Mammary epithelial cell (primary cell): ENCODE measurements at regions of chr17 and their contacts with region 1.

Region 1: GRCh38 chr17:50064258-50065001 is 8.5 kb downstream of the ITGA3 start:
- DNase-seq: peak; percentile 96
- H3K4me3 ChIP-seq: no peak overlapping the region
- H3K27ac ChIP-seq: peak overlapping the region; percentile 73
- H3K4me1 ChIP-seq: peaks cover 66% of the 10 kb centered on the region
- H3K27me3 ChIP-seq: no peaks in the 10 kb centered on the region
- CTCF ChIP-seq: peak in 1 of 2 donors; percentile 4

Region 2: DNA sequence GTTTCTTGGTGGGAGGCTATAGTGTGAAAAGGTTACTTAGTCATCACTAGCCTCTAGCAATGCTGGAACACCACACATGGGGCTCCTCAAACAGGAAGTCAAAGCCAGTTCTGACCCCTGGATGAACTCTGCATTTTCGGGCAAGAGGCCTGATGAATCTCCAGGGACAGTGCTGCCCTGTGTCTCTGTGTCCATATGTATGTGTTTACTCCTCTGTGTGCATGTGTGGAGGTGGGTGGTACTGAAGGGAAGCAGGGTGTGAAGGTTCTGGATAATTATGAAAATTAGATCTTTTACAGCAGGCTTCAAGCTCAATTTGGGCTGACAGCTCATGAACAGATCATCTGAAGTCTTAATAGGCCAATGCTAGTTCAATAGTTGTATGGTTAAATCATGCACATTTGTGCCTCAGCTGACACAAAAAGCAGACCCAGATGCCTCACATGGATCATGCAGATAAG is 1823.3 kb before region 1 on chr17:
- CTCF ChIA-PET with region 1: interaction called, 21 read pairs
- dilution Hi-C with region 1: no loop called
- in situ Hi-C with region 1: no loop called
- intact Hi-C with region 1: no loop called
- DNase-seq: peak; percentile 56
- H3K4me3 ChIP-seq: no peak overlapping the region
- H3K27ac ChIP-seq: peak overlapping the region; percentile 38
- H3K4me1 ChIP-seq: peaks cover 50% of the 10 kb centered on the region
- H3K27me3 ChIP-seq: no peaks in the 10 kb centered on the region
- CTCF ChIP-seq: no peak

Region 3: DNA sequence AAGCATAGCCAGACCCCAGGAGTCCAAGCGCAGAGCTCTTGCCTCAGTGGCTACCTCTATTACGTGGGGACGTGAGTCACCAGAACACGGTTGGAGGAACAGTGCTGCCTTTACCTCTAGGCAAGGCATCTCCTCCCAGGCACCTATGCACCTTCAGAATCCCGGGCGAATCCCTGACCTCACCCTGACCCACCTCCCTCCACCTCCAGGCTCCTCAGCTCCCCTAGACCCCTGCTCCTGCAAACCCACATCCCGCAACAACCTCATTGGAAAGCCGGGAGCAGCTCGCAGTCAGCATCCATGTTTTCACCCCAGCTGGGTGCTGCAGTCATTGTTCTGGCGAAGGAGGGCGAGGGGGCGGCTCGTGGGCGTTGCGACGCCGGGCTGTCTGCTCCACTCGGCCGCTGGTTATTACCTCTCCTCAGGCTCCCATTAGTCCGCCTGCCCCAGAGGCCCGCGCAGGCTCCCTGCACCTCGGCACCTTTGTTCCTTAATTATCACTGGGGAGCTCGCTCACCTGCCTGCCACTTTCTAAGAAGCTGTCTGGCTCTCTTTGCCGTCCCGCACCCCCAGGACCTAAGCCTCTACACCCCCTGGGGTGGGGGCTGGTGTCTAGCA is 120.0 kb before region 1 on chr17:
- CTCF ChIA-PET with region 1: no interaction called
- dilution Hi-C with region 1: no loop called
- in situ Hi-C with region 1: no loop called
- intact Hi-C with region 1: no loop called
- DNase-seq: no peak
- H3K4me3 ChIP-seq: no peak overlapping the region
- H3K27ac ChIP-seq: no peak overlapping the region
- H3K4me1 ChIP-seq: no peaks in the 10 kb centered on the region
- H3K27me3 ChIP-seq: peaks cover 8% of the 10 kb centered on the region
- CTCF ChIP-seq: no peak

Region 4: DNA sequence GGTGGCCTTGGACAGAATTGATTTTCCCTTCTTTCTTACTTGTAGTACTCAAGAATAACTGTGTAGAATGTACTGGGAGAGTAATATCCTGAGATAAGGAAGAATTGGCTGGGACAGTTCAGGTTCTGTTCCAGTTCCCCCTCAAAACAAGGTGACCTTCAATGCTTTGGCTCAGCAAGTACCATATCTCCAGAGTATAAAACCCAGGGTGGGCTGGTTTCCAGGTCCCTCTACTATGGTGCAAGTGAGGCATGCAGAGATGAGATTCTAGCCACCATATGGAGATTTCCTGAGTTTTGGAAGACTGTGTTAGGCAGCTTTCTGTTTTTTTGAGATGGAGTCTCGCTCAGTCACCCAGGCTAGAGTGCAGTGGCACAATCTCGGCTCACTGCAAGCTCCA is 51.4 kb before region 1 on chr17:
- CTCF ChIA-PET with region 1: no interaction called
- dilution Hi-C with region 1: loop called (anchors 5 kb)
- in situ Hi-C with region 1: no loop called
- intact Hi-C with region 1: no loop called
- DNase-seq: no peak
- H3K4me3 ChIP-seq: no peak overlapping the region
- H3K27ac ChIP-seq: no peak overlapping the region
- H3K4me1 ChIP-seq: no peaks in the 10 kb centered on the region
- H3K27me3 ChIP-seq: no peaks in the 10 kb centered on the region
- CTCF ChIP-seq: no peak

Region 5: GRCh38 chr17:50079334-50080095 is 15.1 kb after region 1 on chr17:
- CTCF ChIA-PET with region 1: interaction called, 6 read pairs
- dilution Hi-C with region 1: no loop called
- in situ Hi-C with region 1: no loop called
- intact Hi-C with region 1: loop called (anchors 2 kb)
- DNase-seq: peak; percentile 53
- H3K4me3 ChIP-seq: no peak overlapping the region
- H3K27ac ChIP-seq: no peak overlapping the region
- H3K4me1 ChIP-seq: no peaks in the 10 kb centered on the region
- H3K27me3 ChIP-seq: no peaks in the 10 kb centered on the region
- CTCF ChIP-seq: peak; percentile 94 to 98

Region 6: GRCh38 chr17:50108556-50108955 is 44.1 kb after region 1 on chr17:
- CTCF ChIA-PET with region 1: no interaction called
- dilution Hi-C with region 1: no loop called
- in situ Hi-C with region 1: no loop called
- intact Hi-C with region 1: no loop called
- DNase-seq: no peak
- H3K4me3 ChIP-seq: no peak overlapping the region
- H3K27ac ChIP-seq: no peak overlapping the region
- H3K4me1 ChIP-seq: peaks cover 30% of the 10 kb centered on the region
- H3K27me3 ChIP-seq: no peaks in the 10 kb centered on the region
- CTCF ChIP-seq: no peak